ENCODE measurements at regions of chr14 and their contacts with region 1.

Region 1: DNA sequence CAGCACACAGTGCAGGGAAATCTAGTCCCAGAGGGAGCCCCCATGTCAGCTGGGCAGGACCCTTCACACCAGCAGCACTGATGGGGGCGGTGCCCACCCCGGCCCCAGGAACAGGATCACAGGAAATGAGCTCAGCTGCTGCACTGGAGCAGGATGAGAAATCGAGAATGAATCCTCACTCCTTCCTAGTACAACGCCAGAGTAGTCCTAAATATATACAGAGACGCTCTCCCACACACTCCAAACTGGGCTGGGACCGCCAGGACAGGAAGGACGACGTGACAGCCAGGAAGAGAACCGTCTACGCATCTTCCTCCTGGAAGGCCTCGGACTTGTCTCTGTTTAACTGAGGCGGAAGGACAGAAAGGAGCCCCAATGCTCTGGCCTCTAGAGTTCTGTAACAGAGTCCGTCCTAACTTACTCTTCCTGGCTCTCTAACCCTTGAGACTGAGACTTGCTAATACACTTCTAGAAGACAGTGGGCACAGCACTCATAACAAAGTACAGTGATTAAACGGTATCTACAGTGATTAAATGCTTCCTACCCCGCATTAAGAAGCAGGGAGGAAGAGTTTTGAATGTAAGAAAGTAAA is 33.4 kb downstream of the CDC42BPB start:
- DNase-seq: no peak

Region 2: GRCh38 chr14:103002578-103003350 is 21.2 kb before region 1 on chr14:
- intact Hi-C with region 1: no loop called
- DNase-seq: no peak

Region 3: GRCh38 chr14:103045371-103045869 is 21.4 kb after region 1 on chr14:
- intact Hi-C with region 1: no loop called
- DNase-seq: no peak

Region 4: GRCh38 chr14:103057365-103058096 is 33.6 kb after region 1 on chr14 and contains the start of gene CDC42BPB:
- intact Hi-C with region 1: loop called (anchors 5 kb)
- DNase-seq: peak; percentile 92
- total RNA-seq, gene CDC42BPB: 81.8 TPM